HepG2 (cell line): ENCODE measurements at regions of chr14 and their contacts with region 1.

Region 1: DNA sequence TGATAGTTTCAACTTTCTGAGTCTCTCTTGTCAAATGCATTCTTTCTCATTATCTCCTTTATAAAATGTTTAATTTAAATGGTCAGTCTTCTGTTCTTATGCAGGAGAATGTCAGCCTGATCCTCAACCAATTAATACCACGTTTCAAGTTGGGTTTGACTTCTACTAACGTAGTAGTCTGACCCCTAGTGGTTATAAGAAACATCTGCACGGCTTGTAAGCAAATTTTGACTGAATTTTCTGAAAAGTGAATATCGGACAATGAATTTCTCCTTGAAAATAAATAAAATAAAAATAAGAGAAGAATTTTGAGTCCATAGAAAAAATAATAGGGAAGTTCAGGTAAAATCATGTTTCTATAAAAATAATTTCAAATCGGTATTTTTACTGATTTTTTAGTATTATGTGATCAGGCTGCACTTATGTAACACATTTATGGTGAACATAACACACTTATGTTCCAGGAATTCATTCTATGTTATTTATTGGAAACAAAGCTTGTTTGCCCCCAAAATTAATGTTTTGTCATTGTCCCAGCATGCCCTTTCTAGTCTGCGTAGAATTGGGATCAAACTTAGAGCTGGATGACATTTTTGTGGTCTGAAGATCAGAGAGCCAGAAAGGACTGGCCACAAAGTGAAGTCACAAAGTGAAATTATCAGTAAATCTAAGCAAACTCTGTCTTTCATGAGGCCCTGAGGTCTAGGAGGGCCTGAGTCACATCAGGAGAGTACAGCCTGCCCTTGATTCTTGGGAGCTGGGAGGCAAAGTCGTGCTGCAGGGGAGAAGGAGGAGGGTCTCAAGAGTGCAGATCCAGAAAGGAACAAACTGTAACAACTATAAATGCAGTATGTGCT is 101.2 kb upstream of the STXBP6 start:
- DNase-seq: peak; percentile 72
- ATAC-seq: peak; percentile 77
- H3K4me3 ChIP-seq: no peak overlapping the region
- H3K27ac ChIP-seq: no peak overlapping the region
- H3K4me1 ChIP-seq: no peaks in the 10 kb centered on the region
- H3K27me3 ChIP-seq: no peaks in the 10 kb centered on the region
- CTCF ChIP-seq: peak; percentile 86
- EP300 ChIP-seq: no peak
- POLR2A ChIP-seq: no peak
- RAD21 ChIP-seq: no peak; the same call in 1 of the 2 replicates

Region 2: DNA sequence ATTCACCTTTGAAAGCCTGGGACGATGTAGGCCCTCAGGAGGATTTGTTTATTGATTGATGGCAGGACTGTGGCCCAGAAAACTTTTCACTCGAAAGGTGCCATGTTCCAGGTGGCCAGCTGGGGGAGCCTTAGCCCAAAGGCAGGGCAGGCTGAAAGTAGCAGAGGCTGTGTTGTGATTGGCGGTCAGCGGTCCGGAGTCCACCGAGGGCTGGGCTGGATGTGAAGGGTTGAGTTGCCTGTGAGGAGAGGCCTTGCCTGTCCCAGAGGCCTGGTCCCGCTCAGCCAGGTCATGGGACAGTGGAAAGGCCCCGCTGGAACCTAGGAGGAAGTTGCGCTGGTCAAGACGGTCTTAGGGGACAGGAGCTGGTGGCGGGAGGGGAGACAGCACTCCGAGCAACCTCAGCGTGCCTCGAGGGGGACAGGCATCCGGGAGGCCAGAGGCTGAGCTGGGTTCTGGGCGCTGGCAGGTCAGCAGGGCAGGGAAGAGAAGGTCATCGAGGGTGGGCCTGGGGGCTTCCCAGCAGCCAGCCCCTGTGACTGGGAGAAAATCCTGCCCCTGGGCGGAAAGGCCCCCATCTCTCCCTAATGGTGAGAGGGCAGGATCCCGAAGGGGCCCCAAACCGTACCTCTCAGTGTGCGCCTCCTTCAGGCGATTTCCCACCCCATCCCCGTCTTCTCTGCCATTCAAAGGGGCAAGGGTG is 669.4 kb before region 1 on chr14:
- CTCF ChIA-PET with region 1: no interaction called
- POLR2A ChIA-PET with region 1: no interaction called
- in situ Hi-C with region 1: no loop called
- intact Hi-C with region 1: loop called (anchors 10 kb)
- DNase-seq: peak; percentile 97
- ATAC-seq: peak; percentile 100
- H3K4me3 ChIP-seq: peak overlapping the region in 2 of 3 experiments; percentile 40 to 65; a peak in 4 of 6 replicates
- H3K27ac ChIP-seq: no peak overlapping the region
- H3K4me1 ChIP-seq: peaks cover 11% of the 10 kb centered on the region
- H3K27me3 ChIP-seq: no peaks in the 10 kb centered on the region
- CTCF ChIP-seq: peak; percentile 100
- EP300 ChIP-seq: peak in 1 of 2 experiments; percentile 36; a peak in 1 of 4 replicates
- POLR2A ChIP-seq: peak; percentile 42 to 71; a peak in 2 of 4 replicates
- RAD21 ChIP-seq: peak; percentile 96

Region 3: DNA sequence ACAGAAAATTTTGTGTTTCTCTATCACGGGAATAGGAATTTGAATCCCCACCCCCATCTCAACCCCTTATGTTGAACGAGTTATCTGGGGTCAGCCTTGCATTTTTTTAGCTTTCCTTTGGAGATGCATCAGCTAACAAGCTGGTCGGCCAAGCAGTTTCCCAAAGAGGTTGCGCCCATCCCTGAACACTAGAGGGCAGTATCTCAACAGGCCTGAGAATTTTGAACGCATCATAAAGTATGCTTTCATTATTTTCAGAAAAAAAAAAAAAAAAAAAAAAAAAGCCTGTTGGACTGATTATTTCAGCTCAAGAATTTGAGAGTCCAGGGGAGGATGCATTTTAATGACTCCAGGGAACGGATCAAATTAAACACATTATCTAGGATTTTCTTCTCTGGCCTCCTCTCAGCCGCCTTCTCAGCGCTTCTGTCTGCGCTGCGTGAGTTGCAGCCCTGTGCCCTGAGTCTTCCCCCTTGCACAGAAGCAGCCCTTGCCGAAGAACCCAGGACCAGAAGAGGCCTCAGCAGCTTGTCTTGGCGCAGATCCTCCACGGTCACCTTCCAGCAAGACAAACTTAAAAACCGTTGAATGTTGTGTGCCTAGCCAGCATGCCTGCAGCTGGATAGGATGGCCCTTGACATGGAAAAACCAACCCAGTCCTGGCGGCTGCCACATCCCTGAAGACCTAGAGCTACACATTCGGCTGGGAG is 440.6 kb before region 1 on chr14:
- CTCF ChIA-PET with region 1: interaction called, 47 read pairs
- POLR2A ChIA-PET with region 1: no interaction called
- in situ Hi-C with region 1: no loop called
- intact Hi-C with region 1: loop called (anchors 1 kb)
- DNase-seq: peak; percentile 71
- ATAC-seq: peak; percentile 81
- H3K4me3 ChIP-seq: no peak overlapping the region
- H3K27ac ChIP-seq: no peak overlapping the region
- H3K4me1 ChIP-seq: peaks cover 7% of the 10 kb centered on the region
- H3K27me3 ChIP-seq: peaks cover 4 to 22% of the 10 kb centered on the region in 2 experiments; a peak in 2 of 5 replicates
- CTCF ChIP-seq: peak; percentile 83
- EP300 ChIP-seq: no peak
- POLR2A ChIP-seq: no peak
- RAD21 ChIP-seq: peak; percentile 65

Region 4: GRCh38 chr14:24761141-24761540 is 390.0 kb before region 1 on chr14:
- CTCF ChIA-PET with region 1: interaction called, 7 read pairs
- POLR2A ChIA-PET with region 1: no interaction called
- in situ Hi-C with region 1: no loop called
- intact Hi-C with region 1: loop called (anchors 1 kb)
- DNase-seq: peak; percentile 28
- ATAC-seq: peak; percentile 71
- H3K4me3 ChIP-seq: no peak overlapping the region
- H3K27ac ChIP-seq: no peak overlapping the region
- H3K4me1 ChIP-seq: no peaks in the 10 kb centered on the region
- H3K27me3 ChIP-seq: no peaks in the 10 kb centered on the region; a peak in 1 of 5 replicates
- CTCF ChIP-seq: peak; percentile 56
- EP300 ChIP-seq: no peak
- POLR2A ChIP-seq: no peak
- RAD21 ChIP-seq: no peak

Region 5: GRCh38 chr14:25132732-25133422 is 18.3 kb before region 1 on chr14:
- CTCF ChIA-PET with region 1: interaction called, 11 read pairs
- POLR2A ChIA-PET with region 1: no interaction called
- in situ Hi-C with region 1: no loop called
- intact Hi-C with region 1: loop called (anchors 2 kb)
- DNase-seq: peak; percentile 84
- ATAC-seq: peak; percentile 99
- H3K4me3 ChIP-seq: no peak overlapping the region
- H3K27ac ChIP-seq: no peak overlapping the region
- H3K4me1 ChIP-seq: peaks cover 4% of the 10 kb centered on the region; the same call in 1 of the 2 replicates
- H3K27me3 ChIP-seq: peaks cover 0 to 8% of the 10 kb centered on the region in 2 experiments; a peak in 2 of 5 replicates
- CTCF ChIP-seq: peak; percentile 100
- EP300 ChIP-seq: no peak
- POLR2A ChIP-seq: no peak
- RAD21 ChIP-seq: peak; percentile 97

Region 6: GRCh38 chr14:25400607-25401206 is 249.5 kb after region 1 on chr14:
- CTCF ChIA-PET with region 1: no interaction called
- POLR2A ChIA-PET with region 1: no interaction called
- in situ Hi-C with region 1: no loop called
- intact Hi-C with region 1: loop called (anchors 10 kb)
- DNase-seq: peak; percentile 70
- ATAC-seq: peak; percentile 94
- H3K4me3 ChIP-seq: no peak overlapping the region
- H3K27ac ChIP-seq: no peak overlapping the region
- H3K4me1 ChIP-seq: no peaks in the 10 kb centered on the region
- H3K27me3 ChIP-seq: no peaks in the 10 kb centered on the region
- CTCF ChIP-seq: peak; percentile 87
- EP300 ChIP-seq: no peak
- POLR2A ChIP-seq: no peak
- RAD21 ChIP-seq: no peak